Right cardiac atrium (tissue), 5 donors: ENCODE measurements at regions of chr2 and their contacts with region 1.

Region 1: DNA sequence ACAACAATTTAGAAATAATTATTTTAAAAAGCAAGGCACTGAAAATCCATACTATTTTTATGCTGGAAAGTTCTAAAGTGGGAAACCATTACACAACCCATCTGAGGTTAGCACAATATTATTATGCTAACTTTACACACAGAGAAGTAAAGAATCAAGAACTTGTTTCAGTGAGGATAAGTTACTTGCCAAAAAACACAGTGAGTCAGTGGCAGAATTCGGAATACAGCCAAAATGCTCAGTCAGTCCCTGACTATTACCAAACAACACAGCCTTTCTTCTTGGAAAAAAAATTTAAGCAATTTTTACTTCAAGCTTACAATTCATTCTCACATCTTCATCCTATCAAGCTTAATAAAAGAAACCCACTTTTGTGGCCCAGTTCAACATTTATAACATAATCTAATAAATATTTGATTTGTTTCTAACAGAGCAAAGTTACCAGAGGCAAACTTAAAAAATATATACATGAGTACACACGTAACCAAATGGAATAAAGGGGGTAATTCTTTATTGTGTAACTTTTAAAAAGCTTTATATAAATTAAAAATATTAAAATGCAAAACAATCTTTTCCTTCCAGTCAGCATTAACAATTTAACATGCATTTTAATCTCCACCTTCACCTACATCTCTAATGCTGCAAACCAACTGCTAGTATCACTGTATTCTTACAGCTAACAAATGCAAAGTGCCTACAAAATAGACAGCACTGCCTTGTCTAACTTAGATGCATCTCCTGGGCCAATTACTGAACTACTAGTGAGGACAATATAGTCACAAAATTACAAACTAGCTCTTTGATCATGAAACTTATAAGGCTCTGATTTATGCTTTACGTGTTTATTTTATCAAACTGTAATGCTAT is 55.2 kb downstream of the CCDC88A start:
- DNase-seq: peak in 1 of 3 donors; percentile 17
- ATAC-seq: peak; percentile 95 to 97
- H3K4me3 ChIP-seq: no peak overlapping the region
- H3K27ac ChIP-seq: no peak overlapping the region
- H3K4me1 ChIP-seq: no peaks in the 10 kb centered on the region
- H3K27me3 ChIP-seq: no peaks in the 10 kb centered on the region

Region 2: DNA sequence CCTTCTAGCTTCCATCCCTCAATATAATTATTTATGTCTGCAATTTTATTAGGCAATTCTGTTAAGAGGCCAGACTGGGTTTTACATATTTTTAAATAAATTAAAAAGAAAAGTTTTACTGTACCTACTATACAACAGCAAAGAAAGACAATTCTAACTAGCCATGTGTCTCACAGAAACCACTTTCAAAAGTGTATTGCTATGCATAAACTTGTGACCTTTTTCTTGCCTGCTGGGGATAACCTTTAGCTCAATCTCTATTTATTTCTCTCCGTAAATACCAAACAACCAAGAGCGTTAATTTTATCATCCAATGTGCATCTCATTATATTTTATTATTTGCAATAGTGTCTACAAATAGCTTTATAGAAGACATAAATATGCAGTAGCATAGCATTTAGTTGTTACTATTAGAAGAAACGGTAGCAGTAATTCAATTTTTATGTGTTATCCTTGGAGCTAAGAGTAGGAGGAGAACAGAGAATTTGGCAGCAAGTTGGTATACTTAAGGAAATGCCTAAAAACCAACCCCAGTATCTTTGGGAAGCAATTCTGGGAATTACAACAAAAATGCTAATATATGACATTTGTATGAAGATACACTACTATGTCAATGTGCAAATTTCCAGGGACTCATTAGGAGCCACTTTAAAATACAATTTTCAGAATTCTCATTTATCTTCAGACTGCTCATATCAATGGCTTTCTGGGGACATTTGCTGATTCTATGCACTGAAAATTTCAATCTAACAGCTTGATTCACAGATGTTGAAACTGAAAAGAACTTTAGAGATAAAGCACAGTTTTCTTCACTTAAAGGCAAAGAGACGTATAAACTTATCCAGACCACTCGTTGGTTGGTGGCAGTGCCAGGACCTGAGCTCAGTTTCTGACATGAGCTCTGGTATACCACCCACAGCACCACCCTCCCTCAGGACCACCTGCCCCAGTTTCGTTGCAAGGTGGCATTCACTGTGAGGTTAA is 291.1 kb before region 1 on chr2:
- intact Hi-C with region 1: no loop called
- DNase-seq: no peak
- ATAC-seq: no peak
- H3K4me3 ChIP-seq: no peak overlapping the region
- H3K27ac ChIP-seq: no peak overlapping the region
- H3K4me1 ChIP-seq: no peaks in the 10 kb centered on the region
- H3K27me3 ChIP-seq: no peaks in the 10 kb centered on the region

Region 3: DNA sequence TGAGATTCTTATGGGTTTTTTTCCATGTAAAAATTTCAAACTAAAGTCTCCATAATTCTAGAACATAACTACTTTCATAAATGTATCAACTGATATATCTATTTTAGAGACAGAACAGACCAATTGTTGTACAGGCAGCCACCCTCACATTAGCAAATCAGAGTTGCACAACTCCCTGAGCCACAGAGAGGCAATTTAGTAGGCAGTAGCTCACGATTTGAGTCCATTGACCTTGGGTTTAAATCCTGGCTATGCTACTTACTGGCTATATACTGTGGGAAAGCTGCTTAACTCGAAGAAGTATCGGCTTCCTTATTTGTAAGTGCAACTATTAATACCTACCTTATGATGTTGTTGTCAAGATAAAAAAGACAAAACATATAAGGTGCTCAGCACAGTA is 111.6 kb before region 1 on chr2:
- intact Hi-C with region 1: no loop called
- DNase-seq: no peak
- ATAC-seq: no peak
- H3K4me3 ChIP-seq: no peak overlapping the region
- H3K27ac ChIP-seq: no peak overlapping the region
- H3K4me1 ChIP-seq: no peaks in the 10 kb centered on the region
- H3K27me3 ChIP-seq: no peaks in the 10 kb centered on the region

Region 4: GRCh38 chr2:55403256-55403998 is 39.0 kb after region 1 on chr2:
- intact Hi-C with region 1: no loop called
- DNase-seq: no peak
- ATAC-seq: no peak
- H3K4me3 ChIP-seq: no peak overlapping the region
- H3K27ac ChIP-seq: no peak overlapping the region
- H3K4me1 ChIP-seq: peaks cover under 1% of the 10 kb centered on the region
- H3K27me3 ChIP-seq: no peaks in the 10 kb centered on the region

Region 5: DNA sequence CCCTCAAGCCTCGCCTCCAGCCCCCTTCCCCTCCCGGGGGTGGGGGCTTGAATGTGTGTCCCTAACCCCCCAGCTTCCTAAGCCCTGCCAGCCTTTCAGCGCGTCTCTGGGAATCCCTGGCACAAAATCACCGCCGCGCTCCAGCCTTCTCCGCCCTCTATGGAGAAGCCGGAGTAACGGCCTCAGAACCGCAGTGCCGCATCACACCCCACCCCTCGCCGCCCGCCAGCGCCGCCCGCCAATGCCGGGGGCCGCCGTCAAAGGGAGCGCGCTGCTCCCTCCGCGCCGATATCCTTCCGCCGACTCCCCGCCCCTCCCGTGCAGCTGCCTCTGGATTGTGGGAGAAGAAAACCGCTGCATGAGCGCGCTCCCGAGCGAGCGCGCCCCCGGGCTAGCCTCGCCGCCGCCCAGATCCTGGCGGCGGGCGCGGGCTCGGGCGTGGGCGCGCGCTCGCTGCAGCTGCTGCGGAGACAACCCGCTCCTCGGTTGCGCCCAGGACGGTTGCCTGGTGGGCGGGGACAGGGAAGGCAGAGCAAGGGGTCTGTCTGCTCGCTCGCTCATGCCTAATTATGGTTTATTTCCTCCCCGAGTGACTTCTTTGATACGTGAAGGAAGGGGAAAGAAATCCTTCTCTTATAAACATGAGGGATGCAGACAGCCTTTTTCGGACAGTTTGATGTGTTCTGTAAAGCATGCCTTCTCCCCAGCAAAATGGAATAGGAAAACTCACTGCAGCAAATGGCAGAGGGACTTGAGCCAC is 55.4 kb after region 1 on chr2 and contains the start of gene CCDC88A:
- intact Hi-C with region 1: loop called in 1 of 4 experiments (anchors 10 kb)
- DNase-seq: peak; percentile 98 to 100 (median 98)
- ATAC-seq: peak; percentile 98 to 99
- H3K4me3 ChIP-seq: peak within 1 kb of the TSS; percentile 65
- H3K27ac ChIP-seq: peak within 1 kb of the TSS; percentile 78
- H3K4me1 ChIP-seq: no peaks in the 10 kb centered on the region
- H3K27me3 ChIP-seq: no peaks in the 10 kb centered on the region
- total RNA-seq, gene CCDC88A: 30.9 to 40.6 (median 32.4) TPM